ENCODE measurements at regions of chr17 and their contacts with region 1.

Region 1: GRCh38 chr17:973053-973452 is 6.5 kb downstream of the NXN start:
- DNase-seq: no peak
- H3K4me3 ChIP-seq: no peak overlapping the region
- H3K27ac ChIP-seq: no peak overlapping the region
- H3K4me1 ChIP-seq: peaks cover 16% of the 10 kb centered on the region
- H3K27me3 ChIP-seq: peaks cover 72% of the 10 kb centered on the region
- CTCF ChIP-seq: no peak

Region 2: DNA sequence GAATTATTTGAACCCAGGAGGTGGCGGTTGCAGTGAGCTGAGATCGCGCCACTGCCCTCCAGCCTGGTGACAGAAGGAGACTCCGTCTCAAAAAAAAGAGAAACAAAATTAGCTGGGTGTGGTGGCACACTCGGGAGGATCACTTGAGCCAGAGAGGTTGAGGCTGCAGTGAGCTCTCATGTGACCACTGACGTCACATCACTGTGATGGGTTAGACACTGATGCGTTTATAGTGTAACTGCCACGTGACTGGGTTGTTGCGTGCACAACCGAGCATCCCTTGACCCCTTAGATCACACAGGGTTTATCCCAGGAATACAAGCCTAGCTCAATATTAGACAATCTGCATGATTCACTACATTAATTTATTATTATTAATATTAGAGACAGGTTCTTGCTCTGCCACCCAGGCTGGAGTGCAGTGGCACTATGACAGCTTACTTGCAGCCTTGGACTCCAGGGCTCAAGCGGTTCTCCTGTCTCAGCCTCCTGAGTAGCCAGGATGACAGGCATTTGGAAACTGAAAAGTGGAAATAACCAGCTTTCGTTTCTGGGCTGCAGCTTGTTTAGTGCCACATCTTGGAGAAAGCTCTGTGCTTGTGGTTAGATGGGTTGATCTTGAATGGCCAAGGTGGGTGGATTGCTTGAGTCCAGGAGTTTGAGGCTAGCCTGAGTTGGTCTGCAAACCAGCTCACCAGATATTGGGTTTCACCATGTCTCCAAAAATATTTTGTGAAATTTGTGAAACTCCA is 233.1 kb after region 1 on chr17:
- CTCF ChIA-PET with region 1: no interaction called
- POLR2A ChIA-PET with region 1: interaction called, 15 read pairs
- intact Hi-C with region 1: no loop called
- DNase-seq: no peak
- H3K4me3 ChIP-seq: no peak overlapping the region
- H3K27ac ChIP-seq: no peak overlapping the region
- H3K4me1 ChIP-seq: no peaks in the 10 kb centered on the region
- H3K27me3 ChIP-seq: peaks cover under 1% of the 10 kb centered on the region
- CTCF ChIP-seq: no peak